HCT116 (cell line): ENCODE measurements at regions of chr2 and their contacts with region 1.

Region 1: DNA sequence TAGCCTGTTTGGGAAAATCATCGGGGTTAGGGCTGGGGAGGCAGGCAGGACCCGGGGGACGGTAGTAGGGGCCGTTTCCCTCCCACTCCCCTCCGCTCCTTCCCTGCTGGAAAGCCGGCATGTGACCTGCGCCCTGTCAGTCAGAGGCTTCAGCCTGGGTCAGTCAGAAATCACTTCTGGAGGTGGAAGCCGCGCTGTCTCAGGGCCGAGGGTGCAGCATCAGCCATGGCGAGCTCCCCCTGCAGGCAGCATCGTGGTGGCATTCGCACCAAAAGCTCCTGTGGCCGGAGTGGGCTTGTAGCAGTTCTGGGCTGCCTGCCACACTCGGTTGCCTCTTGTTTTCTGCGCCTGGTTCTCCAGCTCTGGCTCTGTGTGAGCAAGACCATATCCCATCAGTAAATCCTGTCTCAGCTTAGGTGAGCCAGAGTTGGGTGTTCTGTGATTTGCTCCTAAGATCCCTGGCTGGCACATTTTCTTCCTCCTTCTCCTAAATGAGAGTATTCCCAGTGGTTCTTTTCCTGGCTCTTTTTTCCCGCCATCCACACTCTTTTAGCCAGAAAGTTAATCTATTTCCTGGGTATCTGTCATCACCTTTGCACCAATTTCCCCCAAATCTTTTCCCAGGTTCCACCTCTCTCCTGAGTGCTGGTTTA is 123.9 kb upstream of the CD302 start:
- DNase-seq: peak; percentile 52
- ATAC-seq: peak; percentile 99
- H3K4me3 ChIP-seq: peak overlapping the region in 1 of 2 experiments; percentile 15; a peak in 2 of 4 replicates
- H3K27ac ChIP-seq: no peak overlapping the region
- H3K4me1 ChIP-seq: peaks cover 0 to 11% of the 10 kb centered on the region in 2 experiments; a peak in 1 of 4 replicates
- H3K27me3 ChIP-seq: no peaks in the 10 kb centered on the region
- CTCF ChIP-seq: peak; percentile 56 to 97 (median 91); a peak in 5 of 6 replicates
- POLR2A ChIP-seq: no peak
- RAD21 ChIP-seq: peak; percentile 70

Region 2: DNA sequence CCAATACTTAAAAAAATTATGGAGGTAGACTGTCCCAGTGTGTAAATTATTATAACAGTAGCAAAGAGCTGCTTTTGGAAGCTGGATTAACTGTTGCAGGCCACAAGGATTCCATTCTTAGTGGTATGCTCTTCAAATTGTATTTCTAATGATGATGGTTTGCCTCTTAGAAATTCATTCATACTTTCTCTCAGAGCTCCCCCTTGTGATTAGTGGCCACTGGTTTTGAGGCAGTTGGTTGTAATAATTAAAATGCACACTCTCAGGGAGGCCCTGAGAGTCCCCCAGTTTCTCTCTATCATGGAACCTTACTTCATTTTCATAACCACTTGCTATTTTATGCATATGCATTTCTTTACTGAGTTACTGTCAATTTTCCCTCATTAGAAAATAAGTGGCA is 18.1 kb after region 1 on chr2:
- CTCF ChIA-PET with region 1: interaction called, 11 read pairs
- POLR2A ChIA-PET with region 1: no interaction called
- RAD21 ChIA-PET with region 1: no interaction called
- intact Hi-C with region 1: no loop called
- DNase-seq: peak; percentile 6
- ATAC-seq: peak; percentile 69
- H3K4me3 ChIP-seq: no peak overlapping the region
- H3K27ac ChIP-seq: no peak overlapping the region
- H3K4me1 ChIP-seq: no peaks in the 10 kb centered on the region
- H3K27me3 ChIP-seq: no peaks in the 10 kb centered on the region
- CTCF ChIP-seq: peak; percentile 27 to 47 (median 31); a peak in 4 of 6 replicates
- POLR2A ChIP-seq: no peak
- RAD21 ChIP-seq: peak; percentile 71